ENCODE measurements at regions of chr1 and their contacts with region 1.

Region 1: DNA sequence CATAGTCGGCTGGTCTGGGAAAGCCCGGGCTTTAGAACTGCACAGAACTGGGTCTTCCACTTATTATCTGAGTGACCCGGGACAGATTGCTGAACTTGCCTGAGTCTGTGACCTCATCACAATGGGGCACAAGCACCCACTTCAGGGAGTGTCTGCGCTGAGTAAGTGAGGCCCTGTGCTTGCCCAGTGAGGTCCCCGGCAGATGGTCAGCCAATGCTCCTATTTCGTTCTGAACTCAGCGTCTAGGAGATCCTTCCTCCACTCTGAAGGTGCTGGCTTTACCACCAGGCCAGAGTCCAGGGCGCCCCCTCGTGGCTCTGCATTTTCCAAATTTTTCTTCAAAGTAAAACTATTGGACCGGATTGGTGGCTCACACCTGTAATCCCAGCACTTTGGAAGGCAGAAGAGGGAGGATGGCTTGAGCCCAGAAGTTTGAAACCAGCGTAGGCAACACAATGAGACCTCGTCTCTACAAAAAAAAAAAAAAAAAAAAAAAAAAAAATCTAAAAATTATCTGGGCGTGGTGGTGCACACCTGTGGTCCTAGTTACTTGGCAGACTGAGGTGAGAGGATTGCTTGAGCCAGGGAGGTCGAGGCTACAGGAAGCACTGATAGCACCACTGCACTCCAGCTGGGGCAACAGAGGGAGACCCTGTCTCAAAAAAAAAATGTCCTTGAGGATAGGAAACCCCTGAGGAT is 61.7 kb downstream of the FCRL5 start:
- DNase-seq: peak; percentile 78

Region 2: DNA sequence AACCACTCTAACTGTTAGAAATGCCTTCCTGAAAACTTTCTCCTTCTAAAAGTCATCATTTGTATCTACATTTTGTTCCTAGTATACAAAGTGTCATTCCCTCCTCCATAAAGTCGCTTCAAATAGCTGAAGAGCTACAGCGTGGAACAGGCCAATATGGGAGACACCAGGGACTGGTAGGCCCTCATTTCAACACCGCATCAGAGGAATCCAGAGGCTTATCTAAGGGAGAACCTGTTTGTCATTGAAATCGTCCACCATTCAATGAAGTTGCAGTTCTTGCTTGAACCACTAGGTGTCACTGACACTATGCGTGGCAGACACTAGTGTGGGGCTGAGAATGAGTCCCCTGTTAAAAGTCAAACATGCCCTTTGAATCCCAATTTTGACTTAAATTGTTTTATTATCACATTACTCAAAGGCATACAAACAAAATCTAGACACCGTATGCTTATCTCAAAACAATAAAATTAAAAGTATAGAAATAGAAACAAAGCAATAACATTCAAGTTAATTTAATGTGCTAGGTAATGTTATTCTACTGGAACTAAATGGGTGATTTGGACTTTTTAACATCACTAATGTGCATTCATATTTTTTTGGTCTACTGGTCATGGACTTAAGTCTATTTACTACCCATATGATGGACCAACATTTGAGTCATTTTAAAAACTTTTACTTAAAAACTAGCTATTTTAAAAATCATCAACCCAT is 120.7 kb before region 1 on chr1:
- in situ Hi-C with region 1: loop called (anchors 10 kb)
- DNase-seq: peak; percentile 81

Measured in KBM-7 (cell line).